Activated T-helper 2 cell treated with anti-CD3 and anti-CD28 coated beads, Interferon-gamma antibody, Interleukin-2, Interleukin-4, amounts not matched to agents 10 μg/mL and 5 μg/mL and 100 μg/mL, durations not matched to agents 14 hours and 24 hours and 36 hours (primary cell): ENCODE measurements at regions of chr3 and their contacts with region 1.

Region 1: DNA sequence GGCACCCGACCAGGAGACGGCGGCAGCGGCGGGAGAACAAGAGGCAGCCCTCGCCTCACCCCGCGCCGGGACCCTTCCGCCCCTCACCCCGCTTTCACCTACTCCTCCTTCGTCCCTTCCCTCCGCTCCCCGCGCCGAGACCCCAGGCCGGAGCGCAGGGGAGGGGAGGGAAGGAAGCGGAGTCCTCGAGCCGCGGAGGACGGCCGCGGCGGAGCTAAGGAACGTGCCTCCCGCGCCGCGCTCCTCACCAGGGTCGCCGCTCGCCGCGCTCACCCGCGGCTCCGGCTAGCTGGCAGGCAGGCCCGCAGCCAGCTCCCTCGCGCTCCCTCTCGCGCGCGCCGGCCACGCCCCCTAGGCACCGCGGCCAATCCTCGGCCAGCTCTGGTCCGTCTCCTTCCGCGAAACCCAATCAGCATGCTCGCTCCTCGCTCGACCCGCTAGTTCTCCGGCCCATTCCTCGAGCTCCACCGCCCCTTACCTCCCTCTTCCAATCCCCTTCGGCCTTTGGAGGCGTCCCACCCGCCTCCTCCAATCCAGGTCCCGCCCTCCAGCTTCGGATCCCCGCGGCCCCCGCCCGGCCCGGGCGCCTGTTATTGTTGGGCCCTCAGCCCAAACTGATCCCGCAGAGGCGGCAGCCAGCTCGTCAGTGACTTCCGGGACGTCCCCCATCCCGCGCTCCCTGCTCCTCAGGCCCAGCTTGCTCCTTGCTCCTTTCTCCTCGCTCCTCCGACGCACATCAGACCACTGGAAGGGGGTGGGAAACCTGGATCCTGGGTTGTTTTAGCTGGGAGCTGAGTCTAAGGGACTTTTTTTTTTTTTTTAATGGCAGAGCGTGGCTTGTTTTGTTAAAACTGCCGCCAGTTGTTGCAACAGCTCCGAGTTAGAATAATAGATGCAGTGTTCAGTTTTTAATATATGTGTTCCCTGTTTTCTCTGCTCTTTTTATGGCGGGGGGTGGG is at the start of gene DCBLD2:
- DNase-seq: peak; percentile 95
- H3K4me3 Mint-ChIP-seq: peak within 1 kb of the TSS; percentile 83
- H3K27ac Mint-ChIP-seq: peak within 1 kb of the TSS; percentile 57
- H3K4me1 Mint-ChIP-seq: peaks cover 14% of the 10 kb centered on the region
- H3K27me3 Mint-ChIP-seq: peaks cover 20% of the 10 kb centered on the region
- total RNA-seq, gene DCBLD2: 4.2 and 5.1 TPM in 2 replicates

Region 2: DNA sequence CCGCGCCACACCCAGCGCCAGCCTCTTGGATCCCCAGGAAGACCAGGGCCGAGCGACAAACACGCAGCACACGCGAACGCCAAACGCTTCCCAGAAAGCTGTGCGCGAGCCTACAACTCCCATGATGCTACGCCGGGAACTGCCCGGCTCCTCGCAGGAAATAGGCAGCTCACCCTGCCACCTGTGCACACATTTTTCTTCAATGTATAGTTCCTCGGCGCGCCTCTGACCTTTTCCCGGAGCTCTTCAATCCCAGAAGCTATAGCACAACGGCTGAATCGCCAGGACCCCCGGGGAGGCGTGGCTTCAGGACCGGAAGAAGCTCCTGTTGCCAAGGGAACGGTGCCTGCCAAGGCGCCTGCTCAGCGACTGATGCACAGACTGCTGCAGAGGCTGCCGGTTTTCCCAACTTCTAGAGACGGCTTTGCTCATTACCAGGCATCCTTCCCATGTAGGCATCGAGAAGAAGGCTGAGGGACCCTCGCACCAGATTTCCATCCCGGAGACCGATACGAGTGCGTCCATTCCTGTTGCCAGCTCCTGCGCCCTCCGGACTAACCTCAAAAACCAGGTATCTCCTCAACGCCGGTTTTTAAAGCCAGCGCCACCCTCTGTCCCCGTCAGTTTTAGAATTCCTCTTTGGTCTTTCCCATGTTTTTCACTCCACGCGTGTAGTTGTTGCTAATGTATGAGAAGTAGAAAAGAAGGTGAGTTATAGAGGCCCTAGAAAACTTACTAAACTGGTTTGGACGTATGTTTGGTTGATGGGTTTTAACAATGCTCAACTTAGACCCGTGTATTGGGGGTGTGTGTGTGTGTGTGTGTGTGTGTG is 1137.0 kb before region 1 on chr3 and contains the start of gene ARL6:
- intact Hi-C with region 1: loop called (anchors 5 kb)
- DNase-seq: peak; percentile 69
- H3K4me3 Mint-ChIP-seq: peak within 1 kb of the TSS; percentile 89
- H3K27ac Mint-ChIP-seq: peak within 1 kb of the TSS; percentile 82
- H3K4me1 Mint-ChIP-seq: peaks cover 19% of the 10 kb centered on the region
- H3K27me3 Mint-ChIP-seq: peaks cover 3% of the 10 kb centered on the region
- total RNA-seq, gene ARL6: 3.2 and 3.9 TPM in 2 replicates

Region 3: GRCh38 chr3:98980915-98981596 is 79.4 kb after region 1 on chr3:
- intact Hi-C with region 1: loop called (anchors 2 kb)
- DNase-seq: no peak
- H3K4me3 Mint-ChIP-seq: no peak overlapping the region
- H3K27ac Mint-ChIP-seq: no peak overlapping the region
- H3K4me1 Mint-ChIP-seq: peaks cover 21% of the 10 kb centered on the region
- H3K27me3 Mint-ChIP-seq: peaks cover 15% of the 10 kb centered on the region